Activated T-helper 2 cell treated with anti-CD3 and anti-CD28 coated beads, Interferon-gamma antibody, Interleukin-2, Interleukin-4, amounts not matched to agents 10 μg/mL and 5 μg/mL and 100 μg/mL, durations not matched to agents 14 hours and 24 hours and 36 hours (primary cell): ENCODE measurements at regions of chr10 and their contacts with region 1.

Region 1: DNA sequence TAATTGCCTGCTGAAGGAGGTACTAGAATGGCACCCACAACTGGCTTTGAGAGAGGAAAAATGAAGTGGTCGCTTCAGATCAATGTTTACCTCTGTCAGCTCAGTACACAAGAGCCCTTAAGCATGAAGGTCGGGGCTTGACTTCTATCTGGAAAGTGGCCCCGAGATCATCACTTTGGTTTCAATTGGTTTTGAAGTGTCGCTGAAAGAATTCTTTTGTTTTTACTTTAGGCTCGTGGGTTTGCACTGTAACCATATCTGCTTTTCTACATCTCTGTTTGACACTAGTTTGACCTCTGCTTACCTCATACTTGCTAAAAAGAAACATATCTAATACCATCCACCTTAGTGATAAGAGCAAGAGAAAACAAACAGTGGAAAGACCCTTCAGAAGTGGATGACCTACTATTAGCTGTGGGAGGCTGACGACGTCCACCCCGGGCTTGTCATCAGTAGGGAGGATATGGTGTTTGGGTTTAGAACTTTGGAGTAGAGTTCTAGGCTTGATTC is 361.8 kb downstream of the GATA3 start:
- DNase-seq: peak; percentile 65
- H3K4me3 Mint-ChIP-seq: no peak overlapping the region
- H3K27ac Mint-ChIP-seq: peak overlapping the region; percentile 95
- H3K4me1 Mint-ChIP-seq: peaks cover 57% of the 10 kb centered on the region
- H3K27me3 Mint-ChIP-seq: no peaks in the 10 kb centered on the region

Region 2: DNA sequence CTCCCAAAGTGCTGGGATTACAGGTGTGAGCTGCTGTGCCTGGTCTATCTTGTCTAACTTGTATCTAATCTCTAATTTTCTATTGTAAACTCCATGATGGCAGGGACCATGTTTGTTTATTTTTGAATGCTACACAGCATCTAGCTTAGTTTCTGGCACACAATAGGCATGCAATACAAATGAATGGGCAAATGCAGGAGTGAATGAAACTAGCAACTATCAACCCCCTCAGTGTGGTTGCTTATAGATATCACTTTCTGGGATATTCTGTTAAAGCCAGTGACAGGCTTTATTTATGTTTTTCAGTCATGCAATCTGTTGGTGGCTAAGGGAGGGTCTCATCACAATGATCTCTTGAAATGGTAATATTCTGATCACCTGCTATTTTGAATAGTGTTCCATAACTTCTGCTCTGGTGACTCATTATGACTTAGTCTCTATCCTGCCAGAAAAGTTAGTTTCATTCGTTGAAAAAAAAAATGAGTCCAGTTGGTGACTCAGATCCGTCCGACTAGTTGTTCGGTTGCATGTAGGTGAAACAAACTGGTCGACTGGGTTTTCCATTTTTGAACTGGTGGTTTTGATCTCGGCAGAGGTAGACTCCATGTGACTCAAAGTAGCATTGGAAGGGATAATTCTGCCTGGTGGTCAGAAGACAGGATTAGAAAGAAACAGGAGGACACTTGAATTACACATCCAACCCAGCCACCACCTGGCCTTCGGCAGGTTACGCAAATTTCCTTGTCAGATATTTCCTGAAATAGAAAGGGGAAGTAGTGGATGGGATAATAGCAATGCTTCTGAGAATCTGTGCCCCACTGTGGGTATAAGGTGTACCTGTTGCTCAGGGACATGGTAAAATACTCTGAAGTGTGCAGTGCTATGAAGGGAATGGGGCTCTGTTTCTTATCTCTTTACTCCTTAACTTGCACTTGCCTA is 285.0 kb before region 1 on chr10:
- intact Hi-C with region 1: loop called (anchors 1 kb)
- DNase-seq: peak; percentile 55
- H3K4me3 Mint-ChIP-seq: peak overlapping the region; percentile 47
- H3K27ac Mint-ChIP-seq: peak overlapping the region; percentile 80
- H3K4me1 Mint-ChIP-seq: peaks cover 62% of the 10 kb centered on the region
- H3K27me3 Mint-ChIP-seq: no peaks in the 10 kb centered on the region

Region 3: DNA sequence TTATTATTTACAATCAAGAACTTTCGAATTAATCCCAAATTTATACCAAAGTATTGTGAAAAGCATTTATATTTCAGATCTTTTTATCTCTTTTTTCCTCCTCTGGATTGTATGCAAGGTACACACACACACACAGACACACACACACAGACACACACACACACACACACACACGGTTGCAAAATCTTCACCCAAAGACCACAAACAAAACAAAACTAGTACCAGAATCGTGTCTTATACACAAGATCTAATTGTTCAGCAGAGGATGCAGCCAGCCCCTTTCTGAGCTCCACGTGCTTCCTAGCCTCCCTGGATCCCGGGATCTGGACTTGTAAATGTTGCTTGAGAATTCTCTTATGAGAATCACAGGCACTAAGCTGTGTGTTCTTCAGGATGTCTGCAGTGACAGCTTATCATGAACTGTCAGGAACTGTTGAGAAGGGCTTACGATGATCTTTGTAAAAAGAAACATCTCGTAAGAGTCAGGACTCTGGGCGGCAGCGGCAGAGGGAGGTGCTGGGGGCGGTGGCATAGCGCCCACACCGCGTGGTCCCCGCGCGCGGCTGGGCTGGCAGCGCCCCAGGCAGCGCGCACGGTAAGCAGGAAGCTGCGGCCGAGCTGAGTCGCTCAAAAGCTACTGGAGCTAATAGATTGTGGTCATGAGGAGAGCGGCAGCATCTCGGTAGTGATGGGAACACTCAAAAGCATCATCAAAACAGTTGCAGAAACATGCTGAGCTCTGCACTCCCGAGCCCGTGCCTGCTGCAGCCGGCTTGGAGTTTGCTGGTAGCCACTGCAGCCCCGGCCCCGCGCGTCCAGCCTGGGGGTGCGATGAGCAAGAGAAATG is 84.1 kb before region 1 on chr10:
- intact Hi-C with region 1: loop called (anchors 1 kb)
- DNase-seq: peak; percentile 91
- H3K4me3 Mint-ChIP-seq: peak overlapping the region; percentile 90
- H3K27ac Mint-ChIP-seq: peak overlapping the region; percentile 99
- H3K4me1 Mint-ChIP-seq: peaks cover 69% of the 10 kb centered on the region
- H3K27me3 Mint-ChIP-seq: no peaks in the 10 kb centered on the region

Region 4: GRCh38 chr10:8375137-8375536 is 41.1 kb before region 1 on chr10:
- intact Hi-C with region 1: no loop called
- DNase-seq: no peak
- H3K4me3 Mint-ChIP-seq: no peak overlapping the region
- H3K27ac Mint-ChIP-seq: peak overlapping the region; percentile 69
- H3K4me1 Mint-ChIP-seq: peaks cover 49% of the 10 kb centered on the region
- H3K27me3 Mint-ChIP-seq: no peaks in the 10 kb centered on the region

Region 5: GRCh38 chr10:8577686-8578085 is 161.4 kb after region 1 on chr10:
- intact Hi-C with region 1: loop called (anchors 5 kb)
- DNase-seq: no peak
- H3K4me3 Mint-ChIP-seq: no peak overlapping the region
- H3K27ac Mint-ChIP-seq: peak overlapping the region; percentile 89
- H3K4me1 Mint-ChIP-seq: peaks cover 69% of the 10 kb centered on the region
- H3K27me3 Mint-ChIP-seq: no peaks in the 10 kb centered on the region

Region 6: GRCh38 chr10:9075422-9075821 is 659.2 kb after region 1 on chr10:
- intact Hi-C with region 1: loop called (anchors 5 kb)
- DNase-seq: no peak
- H3K4me3 Mint-ChIP-seq: no peak overlapping the region
- H3K27ac Mint-ChIP-seq: no peak overlapping the region
- H3K4me1 Mint-ChIP-seq: peaks cover 38% of the 10 kb centered on the region
- H3K27me3 Mint-ChIP-seq: no peaks in the 10 kb centered on the region

Region 7: DNA sequence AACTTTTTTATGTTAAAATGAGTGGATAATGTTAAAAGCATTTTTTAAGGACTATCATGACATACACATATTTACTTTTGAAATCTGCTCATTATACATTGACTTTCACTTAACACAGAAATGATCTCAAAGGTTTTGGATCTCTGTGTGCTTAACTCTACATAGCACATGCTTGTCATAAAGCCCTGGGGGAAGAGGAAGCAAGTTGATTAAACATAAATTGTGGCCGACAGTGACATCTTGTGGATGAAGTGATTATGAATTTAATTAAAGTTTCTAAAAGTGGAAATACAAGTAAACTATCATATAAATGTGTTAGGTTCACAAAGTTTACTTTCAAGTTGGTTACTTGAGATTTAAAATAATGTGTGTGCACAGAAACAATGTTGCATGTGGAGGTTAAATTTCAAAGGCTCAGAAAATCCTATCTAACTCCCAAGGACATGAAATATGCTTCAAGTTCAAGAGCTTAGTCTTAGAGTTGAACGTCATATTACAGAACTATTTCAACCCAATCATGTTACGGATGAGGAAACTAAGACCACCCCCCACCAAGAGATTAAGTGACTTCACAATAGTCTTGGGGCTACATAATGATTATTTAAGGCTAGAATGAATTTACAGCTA is 886.0 kb after region 1 on chr10:
- intact Hi-C with region 1: loop called (anchors 2 kb)
- DNase-seq: no peak
- H3K4me3 Mint-ChIP-seq: no peak overlapping the region
- H3K27ac Mint-ChIP-seq: no peak overlapping the region
- H3K4me1 Mint-ChIP-seq: peaks cover 7% of the 10 kb centered on the region
- H3K27me3 Mint-ChIP-seq: peaks cover 5% of the 10 kb centered on the region